ENCODE measurements at regions of chr1 and their contacts with region 1.

Region 1: DNA sequence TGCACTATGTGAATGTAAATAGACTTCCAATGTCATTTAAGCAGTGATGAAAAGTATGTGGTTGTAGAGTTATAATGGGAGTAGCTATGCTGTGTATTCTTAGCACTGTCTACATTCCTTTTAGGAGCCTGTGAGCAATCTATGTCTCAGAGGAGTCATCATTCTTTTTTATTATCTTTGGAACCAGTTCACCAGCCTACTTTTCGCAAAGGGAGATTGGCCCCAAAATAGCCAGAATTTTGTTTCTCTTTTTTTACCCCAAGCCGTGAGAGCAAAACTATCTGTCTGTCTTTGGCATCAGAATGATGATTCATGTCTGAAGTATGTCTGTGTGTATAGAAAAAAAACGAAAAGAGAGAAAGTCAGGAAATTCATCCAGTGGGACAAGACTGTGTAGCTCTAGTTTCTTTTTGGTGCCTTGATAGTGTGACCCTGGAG is 44.2 kb downstream of the OSBPL9 start:
- DNase-seq: no peak
- ATAC-seq: peak; percentile 85

Region 2: GRCh38 chr1:51264451-51264850 is 396.6 kb before region 1 on chr1:
- intact Hi-C with region 1: no loop called
- DNase-seq: no peak
- ATAC-seq: peak; percentile 65

Region 3: DNA sequence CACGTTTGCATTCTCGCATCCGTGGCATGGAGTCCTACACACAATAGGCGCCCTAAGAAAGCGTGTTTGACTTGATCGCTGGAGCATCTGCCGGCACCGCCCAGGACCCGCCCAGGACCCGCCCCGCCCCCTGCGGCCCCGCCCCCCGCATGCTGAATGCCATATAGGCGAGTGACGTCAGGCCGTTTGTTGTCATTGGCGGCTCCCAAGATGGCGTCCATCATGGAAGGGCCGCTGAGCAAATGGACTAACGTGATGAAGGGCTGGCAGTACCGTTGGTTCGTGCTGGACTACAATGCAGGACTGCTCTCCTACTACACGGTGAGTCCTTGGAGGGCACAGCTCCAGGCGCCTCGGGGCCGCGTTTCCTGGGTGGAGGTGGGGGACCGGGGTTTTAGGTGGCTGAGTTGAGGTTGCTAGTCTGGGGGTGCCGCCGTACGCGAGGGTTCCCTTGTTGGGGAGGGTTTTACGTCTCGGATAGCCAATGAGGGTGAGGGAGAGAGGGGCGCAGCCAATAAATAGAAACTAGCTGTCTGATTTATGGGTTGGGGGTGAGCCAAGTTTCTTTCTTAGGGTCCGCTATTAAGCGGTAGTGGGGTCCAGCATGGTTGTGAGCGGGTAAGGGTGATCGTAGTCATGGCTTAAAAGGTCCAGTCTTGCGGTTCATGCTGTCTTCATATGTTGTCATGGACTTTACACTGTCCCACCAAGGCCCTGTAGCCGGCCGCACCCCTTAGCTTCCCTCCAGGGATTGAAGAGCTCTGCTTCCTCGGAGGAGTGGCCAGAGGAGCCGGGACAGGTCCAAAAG is 44.0 kb before region 1 on chr1 and contains the start of gene OSBPL9:
- intact Hi-C with region 1: loop called (anchors 5 kb)
- DNase-seq: peak; percentile 95
- ATAC-seq: peak; percentile 91
- total RNA-seq, gene OSBPL9: 45.1 TPM

Measured in Right ventricle myocardium inferior (tissue), 1 donor.